Activated B cell treated with CpG ODN at 0.5 μM for 24 hours (primary cell): ENCODE measurements at regions of chr6 and their contacts with region 1.

Region 1: GRCh38 chr6:30907758-30908591 is at the start of gene GTF2H4:
- DNase-seq: peak; percentile 76
- ATAC-seq: peak; percentile 97
- H3K4me3 Mint-ChIP-seq: peak within 1 kb of the TSS; percentile 97
- H3K27ac Mint-ChIP-seq: peak within 1 kb of the TSS; percentile 69
- H3K4me1 Mint-ChIP-seq: peaks cover 26% of the 10 kb centered on the region
- H3K27me3 Mint-ChIP-seq: no peaks in the 10 kb centered on the region
- CTCF ChIP-seq: no peak
- total RNA-seq, gene GTF2H4: 37.8 and 42.3 TPM in 2 replicates

Region 2: DNA sequence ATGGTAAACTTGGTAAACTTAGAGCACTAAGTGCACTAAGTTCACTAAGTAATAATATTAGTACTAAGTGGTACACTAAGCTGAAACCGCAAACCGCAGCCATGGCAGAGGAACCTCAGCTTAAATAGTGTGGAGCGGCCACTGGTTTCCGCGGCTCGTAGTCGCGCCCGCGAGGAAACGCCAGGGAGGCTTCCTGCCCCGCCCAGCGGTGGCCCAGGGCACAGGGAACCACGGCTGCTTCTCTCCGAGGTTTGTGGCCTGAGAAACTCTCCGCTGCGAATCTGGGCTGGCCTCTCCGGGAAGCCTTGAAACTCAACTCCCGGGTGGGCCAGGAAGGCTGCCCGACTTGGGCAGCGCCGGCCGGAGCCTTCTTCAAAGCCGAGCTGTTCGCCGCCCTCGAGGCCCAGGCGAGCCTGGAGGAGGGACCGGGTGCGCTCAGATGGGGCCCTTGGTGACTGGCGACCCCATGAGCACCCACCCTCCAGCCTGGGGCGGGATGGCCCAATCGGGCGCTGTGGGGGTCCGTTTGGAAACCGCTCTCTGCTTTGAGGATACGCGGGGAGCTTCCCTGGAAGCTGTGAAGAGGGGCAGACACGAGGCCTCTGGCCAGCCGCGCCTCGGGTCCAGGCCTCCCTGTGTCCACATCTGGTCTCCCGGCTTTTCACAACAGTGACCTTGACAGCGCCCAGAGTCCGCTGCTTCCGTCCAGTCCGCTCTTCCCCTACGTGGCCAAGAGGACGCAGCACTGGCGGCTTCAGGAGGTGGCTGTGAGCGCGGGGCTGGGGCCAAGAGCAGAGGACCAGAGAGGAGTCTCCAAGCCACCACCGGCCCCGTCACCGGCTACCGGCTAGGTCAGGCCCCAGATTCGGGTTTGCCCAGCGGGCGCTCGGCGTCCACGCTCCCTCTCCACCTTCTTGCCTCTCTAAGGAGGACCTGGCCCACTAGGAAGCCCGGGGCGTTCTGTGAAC is 444.0 kb before region 1 on chr6:
- CTCF ChIA-PET with region 1: no interaction called
- POLR2A ChIA-PET with region 1: no interaction called
- intact Hi-C with region 1: loop called (anchors 10 kb)
- DNase-seq: peak; percentile 46
- ATAC-seq: peak; percentile 48
- H3K4me3 Mint-ChIP-seq: peak overlapping the region; percentile 58
- H3K27ac Mint-ChIP-seq: no peak overlapping the region
- H3K4me1 Mint-ChIP-seq: peaks cover 37% of the 10 kb centered on the region
- H3K27me3 Mint-ChIP-seq: peaks cover 68% of the 10 kb centered on the region
- CTCF ChIP-seq: no peak

Region 3: GRCh38 chr6:30678964-30679726 is 228.8 kb before region 1 on chr6:
- CTCF ChIA-PET with region 1: no interaction called
- POLR2A ChIA-PET with region 1: no interaction called
- intact Hi-C with region 1: loop called (anchors 5 kb)
- DNase-seq: peak; percentile 94
- ATAC-seq: peak; percentile 33
- H3K4me3 Mint-ChIP-seq: peak overlapping the region; percentile 92
- H3K27ac Mint-ChIP-seq: peak overlapping the region; percentile 99
- H3K4me1 Mint-ChIP-seq: peaks cover 62% of the 10 kb centered on the region
- H3K27me3 Mint-ChIP-seq: no peaks in the 10 kb centered on the region
- CTCF ChIP-seq: peak; percentile 73

Region 4: GRCh38 chr6:30883685-30884520 is 24.1 kb before region 1 on chr6 and contains the start of gene DDR1:
- CTCF ChIA-PET with region 1: no interaction called
- POLR2A ChIA-PET with region 1: interaction called, 12 read pairs
- intact Hi-C with region 1: loop called (anchors 1 kb)
- DNase-seq: peak; percentile 47
- ATAC-seq: peak; percentile 59
- H3K4me3 Mint-ChIP-seq: peak within 1 kb of the TSS; percentile 84
- H3K27ac Mint-ChIP-seq: peak within 1 kb of the TSS; percentile 80
- H3K4me1 Mint-ChIP-seq: peaks cover 64% of the 10 kb centered on the region
- H3K27me3 Mint-ChIP-seq: no peaks in the 10 kb centered on the region
- CTCF ChIP-seq: no peak
- total RNA-seq, gene DDR1: 16.8 and 18.7 TPM in 2 replicates

Region 5: GRCh38 chr6:30998785-30999184 is 90.8 kb after region 1 on chr6:
- CTCF ChIA-PET with region 1: no interaction called
- POLR2A ChIA-PET with region 1: interaction called, 10 read pairs
- intact Hi-C with region 1: no loop called
- DNase-seq: no peak
- ATAC-seq: no peak
- H3K4me3 Mint-ChIP-seq: no peak overlapping the region
- H3K27ac Mint-ChIP-seq: no peak overlapping the region
- H3K4me1 Mint-ChIP-seq: no peaks in the 10 kb centered on the region
- H3K27me3 Mint-ChIP-seq: peaks cover 12% of the 10 kb centered on the region
- CTCF ChIP-seq: no peak